Heart left ventricle (tissue), 16 donors: ENCODE measurements at regions of chr11 and their contacts with region 1.

Region 1: DNA sequence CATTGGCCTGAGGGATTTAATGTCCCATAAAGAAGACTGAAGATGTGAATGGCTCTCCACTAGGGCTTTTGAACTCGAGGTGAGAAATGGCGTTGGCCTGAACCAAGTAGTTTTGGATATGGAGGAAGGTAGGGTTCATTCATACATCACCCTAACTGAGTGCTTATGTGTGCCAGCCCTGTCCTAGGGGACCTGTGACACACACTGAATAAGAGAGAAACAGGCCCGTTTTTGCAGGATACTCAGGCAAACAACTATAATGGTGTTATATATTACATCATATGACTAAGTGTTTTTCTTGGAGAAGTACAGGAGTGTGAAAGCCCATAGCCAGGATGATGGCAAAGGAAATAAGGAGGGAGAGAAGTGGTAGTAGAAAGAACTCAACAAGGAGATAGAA is 368.1 kb downstream of the TMEM135 start:
- DNase-seq: peak in 1 of 5 donors; percentile 33
- ATAC-seq: peak in 3 of 4 donors; percentile 26 to 84 (median 72)
- H3K4me3 ChIP-seq: no peak overlapping the region
- H3K27ac ChIP-seq: no peak overlapping the region
- H3K4me1 ChIP-seq: no peaks in the 10 kb centered on the region
- H3K27me3 ChIP-seq: no peaks in the 10 kb centered on the region
- CTCF ChIP-seq: no peak
- POLR2A ChIP-seq: no peak

Region 2: GRCh38 chr11:86620891-86621521 is 784.8 kb before region 1 on chr11:
- intact Hi-C with region 1: no loop called
- DNase-seq: no peak
- ATAC-seq: peak in 2 of 4 donors; percentile 43 to 66
- H3K4me3 ChIP-seq: no peak overlapping the region
- H3K27ac ChIP-seq: peak overlapping the region in 11 of 12 donors; percentile 7 to 74 (median 47)
- H3K4me1 ChIP-seq: peaks cover 2 to 58% (median 27%) of the 10 kb centered on the region in 12 donors
- H3K27me3 ChIP-seq: no peaks in the 10 kb centered on the region
- CTCF ChIP-seq: no peak
- POLR2A ChIP-seq: no peak

Region 3: GRCh38 chr11:87368858-87369480 is 36.9 kb before region 1 on chr11:
- intact Hi-C with region 1: loop called in 1 of 10 experiments (anchors 5 kb)
- DNase-seq: peak in 1 of 5 donors; percentile 15
- ATAC-seq: peak in 3 of 4 donors; percentile 61 to 75 (median 66)
- H3K4me3 ChIP-seq: no peak overlapping the region
- H3K27ac ChIP-seq: peak overlapping the region in 7 of 12 donors; percentile 15 to 60 (median 43)
- H3K4me1 ChIP-seq: peaks cover 0 to 37% (median 13%) of the 10 kb centered on the region in 12 donors
- H3K27me3 ChIP-seq: no peaks in the 10 kb centered on the region
- CTCF ChIP-seq: no peak
- POLR2A ChIP-seq: no peak

Region 4: DNA sequence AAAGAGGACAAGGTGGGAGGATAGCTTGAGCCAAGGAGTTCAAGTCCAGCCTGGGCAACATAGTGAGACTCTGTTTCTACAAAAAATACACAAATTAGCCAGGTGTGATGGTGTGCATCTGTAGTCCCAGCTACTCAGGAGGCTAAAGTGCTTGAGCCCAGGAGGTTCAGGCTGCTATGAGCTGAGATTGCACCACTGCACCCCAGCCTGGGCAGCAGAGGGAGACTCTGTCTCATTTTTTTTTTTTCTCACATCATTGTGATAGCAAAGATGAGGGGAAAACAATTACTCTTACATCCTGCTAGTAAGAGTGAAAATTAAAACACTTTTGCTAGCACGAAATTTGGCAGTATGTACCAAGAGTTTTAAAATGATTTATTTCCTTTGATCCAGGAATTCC is 95.5 kb after region 1 on chr11:
- intact Hi-C with region 1: no loop called
- DNase-seq: no peak
- ATAC-seq: no peak
- H3K4me3 ChIP-seq: no peak overlapping the region
- H3K27ac ChIP-seq: no peak overlapping the region
- H3K4me1 ChIP-seq: no peaks in the 10 kb centered on the region
- H3K27me3 ChIP-seq: no peaks in the 10 kb centered on the region
- CTCF ChIP-seq: no peak
- POLR2A ChIP-seq: no peak